ENCODE measurements at regions of chr1 and their contacts with region 1.

Region 1: DNA sequence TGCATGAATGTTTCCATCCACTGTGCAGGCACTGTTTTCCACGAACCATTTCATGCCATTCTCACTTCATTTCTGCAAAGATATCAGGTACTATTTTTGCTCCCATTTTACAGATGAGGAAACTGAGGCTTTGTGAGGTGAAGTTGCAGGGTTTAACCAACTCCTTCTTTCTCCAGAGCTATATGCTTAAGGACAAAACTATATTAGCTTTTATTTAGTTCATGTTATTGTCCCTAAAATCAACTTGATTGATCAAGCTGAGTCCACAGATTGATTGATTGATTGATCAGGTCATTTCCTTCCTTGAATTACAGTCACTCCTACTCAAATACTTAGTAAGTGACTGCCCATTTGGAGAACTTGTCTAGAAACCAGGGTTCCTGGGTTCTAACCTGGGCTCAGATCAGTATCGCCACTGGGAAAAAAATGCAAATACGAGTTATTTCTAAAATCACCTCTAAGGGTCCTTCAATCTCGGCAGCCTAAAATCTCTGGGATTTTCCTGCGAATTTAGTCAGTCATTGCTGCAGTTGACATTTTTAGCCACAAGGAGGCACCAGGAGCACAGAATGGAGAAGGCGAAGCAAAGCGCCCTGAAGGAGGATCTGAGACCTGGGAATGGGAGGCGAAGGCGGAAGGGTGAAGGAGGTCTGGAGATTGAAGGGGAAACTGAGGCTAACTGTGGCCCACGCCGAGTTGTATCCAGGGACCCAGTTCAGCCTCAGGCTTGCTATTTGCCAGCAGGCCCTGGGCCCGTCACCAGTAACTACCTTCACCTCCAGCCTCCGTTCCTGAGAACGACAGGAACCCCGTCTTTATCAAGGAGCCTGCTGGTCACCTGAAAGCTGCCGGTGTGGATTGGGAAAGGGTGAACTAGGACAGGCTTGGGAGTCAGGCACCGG is 14.3 kb upstream of the MUL1 start:
- DNase-seq: peak; percentile 90
- ATAC-seq: peak; percentile 91
- H3K4me3 Mint-ChIP-seq: peak overlapping the region; percentile 57
- H3K27ac Mint-ChIP-seq: no peak overlapping the region
- H3K4me1 Mint-ChIP-seq: 0 out of 2 replicates have a peak, but pooled peaks cover 4% of the 10 kb centered on the region
- H3K27me3 Mint-ChIP-seq: peaks cover 40% of the 10 kb centered on the region
- CTCF ChIP-seq: peak; percentile 75

Region 2: GRCh38 chr1:20540281-20540680 is 18.1 kb after region 1 on chr1:
- CTCF ChIA-PET with region 1: no interaction called
- POLR2A ChIA-PET with region 1: no interaction called
- DNase-seq: no peak
- ATAC-seq: no peak
- H3K4me3 Mint-ChIP-seq: no peak overlapping the region
- H3K27ac Mint-ChIP-seq: no peak overlapping the region
- H3K4me1 Mint-ChIP-seq: no peaks in the 10 kb centered on the region
- H3K27me3 Mint-ChIP-seq: peaks cover 30% of the 10 kb centered on the region
- CTCF ChIP-seq: no peak

Region 3: GRCh38 chr1:20551945-20552727 is 29.9 kb after region 1 on chr1 and contains the start of gene FAM43B:
- CTCF ChIA-PET with region 1: interaction called, 15 read pairs
- POLR2A ChIA-PET with region 1: no interaction called
- DNase-seq: peak; percentile 70
- ATAC-seq: peak; percentile 74
- H3K4me3 Mint-ChIP-seq: peak within 1 kb of the TSS; percentile 75
- H3K27ac Mint-ChIP-seq: no peak within 1 kb of the TSS
- H3K4me1 Mint-ChIP-seq: peaks cover 11% of the 10 kb centered on the region
- H3K27me3 Mint-ChIP-seq: peaks cover 49% of the 10 kb centered on the region
- CTCF ChIP-seq: no peak
- total RNA-seq, gene FAM43B: 2.9 to 3.1 TPM (median 3.1 TPM) in 3 replicates

Measured in WTC11 (cell line).